Transverse colon (tissue), 4 donors: ENCODE measurements at regions of chr17 and their contacts with region 1.

Region 1: GRCh38 chr17:14427900-14428647 is 127.2 kb downstream of the HS3ST3B1 start:
- DNase-seq: peak; percentile 18
- H3K4me3 ChIP-seq: no peak overlapping the region
- H3K27ac ChIP-seq: peak overlapping the region in 2 of 4 donors; percentile 1 to 19
- H3K4me1 ChIP-seq: no peaks in the 10 kb centered on the region
- H3K27me3 ChIP-seq: no peaks in the 10 kb centered on the region
- CTCF ChIP-seq: no peak
- EP300 ChIP-seq: no peak
- POLR2A ChIP-seq: no peak

Region 2: DNA sequence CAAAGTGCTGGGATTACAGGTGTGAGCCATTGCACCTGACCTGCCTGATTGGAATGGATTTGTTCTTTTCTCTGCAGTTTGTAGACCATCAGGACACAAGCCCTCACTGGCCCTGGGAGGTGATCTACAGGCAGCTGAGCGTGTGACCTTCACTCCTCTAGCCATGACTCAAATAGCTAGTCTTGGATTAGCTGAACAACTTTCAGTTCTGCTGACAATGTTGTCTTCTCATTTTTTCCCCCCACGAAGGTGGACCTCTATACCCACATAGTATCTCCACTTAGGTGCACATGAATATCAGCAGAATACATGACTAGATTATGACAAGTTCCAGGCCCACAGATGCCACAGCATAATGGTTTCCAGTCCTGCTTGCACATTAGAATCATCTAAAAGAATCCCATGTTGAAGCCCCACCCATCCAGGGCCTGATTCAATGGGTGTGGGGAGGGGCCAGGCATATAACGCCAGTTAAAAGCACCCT is 90.4 kb before region 1 on chr17:
- in situ Hi-C with region 1: loop called in 1 of 4 experiments (anchors 25 kb)
- intact Hi-C with region 1: no loop called
- DNase-seq: no peak
- H3K4me3 ChIP-seq: no peak overlapping the region
- H3K27ac ChIP-seq: no peak overlapping the region
- H3K4me1 ChIP-seq: peaks cover 0 to 7% (median 0%) of the 10 kb centered on the region in 4 donors
- H3K27me3 ChIP-seq: no peaks in the 10 kb centered on the region
- CTCF ChIP-seq: no peak
- EP300 ChIP-seq: no peak
- POLR2A ChIP-seq: no peak

Region 3: GRCh38 chr17:14699574-14700180 is 271.6 kb after region 1 on chr17:
- in situ Hi-C with region 1: loop called in 1 of 4 experiments (anchors 25 kb)
- intact Hi-C with region 1: no loop called
- DNase-seq: no peak
- H3K4me3 ChIP-seq: no peak overlapping the region
- H3K27ac ChIP-seq: no peak overlapping the region
- H3K4me1 ChIP-seq: no peaks in the 10 kb centered on the region
- H3K27me3 ChIP-seq: no peaks in the 10 kb centered on the region
- CTCF ChIP-seq: no peak
- EP300 ChIP-seq: no peak
- POLR2A ChIP-seq: no peak

Region 4: DNA sequence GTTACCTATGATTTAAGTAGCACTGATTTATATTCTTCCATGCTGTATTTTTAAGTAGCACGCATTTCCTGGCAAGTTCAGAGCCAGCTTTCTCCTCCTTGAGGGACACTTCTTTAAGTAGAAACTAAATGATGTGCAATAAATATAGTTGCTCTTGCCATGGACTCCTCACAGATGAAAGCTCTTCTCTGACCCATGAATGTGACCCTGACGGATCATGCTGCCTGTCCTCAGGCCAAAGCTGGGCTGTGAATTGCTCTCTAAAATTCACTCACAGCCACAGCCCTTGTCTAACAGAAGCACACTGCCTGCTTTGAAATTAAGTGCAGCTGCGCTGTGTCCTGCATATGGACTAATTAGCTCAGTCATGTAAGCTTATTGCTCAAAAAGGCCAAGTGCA is 398.3 kb after region 1 on chr17:
- in situ Hi-C with region 1: no loop called
- intact Hi-C with region 1: no loop called
- DNase-seq: no peak
- H3K4me3 ChIP-seq: no peak overlapping the region
- H3K27ac ChIP-seq: no peak overlapping the region
- H3K4me1 ChIP-seq: no peaks in the 10 kb centered on the region
- H3K27me3 ChIP-seq: no peaks in the 10 kb centered on the region
- CTCF ChIP-seq: no peak
- EP300 ChIP-seq: no peak
- POLR2A ChIP-seq: no peak